Activated CD4-positive, alpha-beta T cell treated with anti-CD3 and anti-CD28 coated beads, Interleukin-2, amount 10 ng/mL, durations not matched to agents 24 days and 14 days (primary cell): ENCODE measurements at regions of chr1 and their contacts with region 1.

Region 1: DNA sequence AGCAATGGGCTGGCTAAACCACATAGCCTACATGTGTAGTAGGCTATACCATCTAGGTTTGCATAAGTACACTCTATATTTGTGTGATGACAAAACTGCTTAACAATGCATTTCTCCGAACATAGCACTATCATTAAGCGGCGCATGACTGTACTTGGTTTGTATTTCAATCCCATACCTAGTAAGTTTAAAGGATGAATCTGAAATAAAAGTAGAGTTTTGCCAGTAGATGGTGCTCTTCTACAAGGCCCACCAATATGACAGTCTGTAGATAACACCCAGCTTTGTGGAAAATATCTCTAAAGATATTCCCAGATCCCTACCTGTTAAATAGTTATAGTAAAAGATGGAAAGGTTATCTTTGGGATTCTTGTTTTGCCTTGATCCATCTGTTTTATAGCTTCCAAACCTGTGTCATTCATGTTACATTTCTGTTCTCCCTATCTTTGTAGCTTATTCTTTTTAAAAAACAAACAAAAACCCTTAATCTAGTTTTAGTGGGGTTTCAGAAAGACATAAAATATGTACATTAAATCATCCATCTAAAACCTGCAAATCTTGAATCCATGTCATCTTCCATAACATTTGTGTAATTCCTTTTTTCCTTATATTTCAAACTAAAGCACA is 33.9 kb upstream of the ASPM start:
- DNase-seq: no peak
- H3K4me3 Mint-ChIP-seq: no peak overlapping the region
- H3K27ac Mint-ChIP-seq: no peak overlapping the region
- H3K4me1 Mint-ChIP-seq: peaks cover 2% of the 10 kb centered on the region
- H3K27me3 Mint-ChIP-seq: no peaks in the 10 kb centered on the region

Region 2: DNA sequence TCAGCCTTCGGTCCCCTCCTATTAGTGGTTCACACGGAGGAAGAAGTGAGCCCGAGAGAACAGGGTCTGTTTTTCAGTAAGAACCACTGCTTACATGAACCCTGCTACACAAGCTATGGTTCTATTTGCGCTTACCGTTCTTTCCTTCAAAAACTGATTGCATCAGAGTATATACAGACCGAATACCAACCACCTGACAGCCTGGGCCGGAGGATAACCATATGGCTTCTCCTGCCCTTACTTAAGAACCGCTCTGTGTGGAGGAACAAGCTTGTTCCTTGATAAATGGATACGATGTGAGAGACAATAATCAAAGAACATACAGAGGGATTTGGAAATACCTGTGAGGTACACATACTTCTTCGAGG is 571.0 kb before region 1 on chr1:
- intact Hi-C with region 1: no loop called
- DNase-seq: no peak
- H3K4me3 Mint-ChIP-seq: no peak overlapping the region
- H3K27ac Mint-ChIP-seq: no peak overlapping the region
- H3K4me1 Mint-ChIP-seq: peaks cover 4% of the 10 kb centered on the region
- H3K27me3 Mint-ChIP-seq: peaks cover 38% of the 10 kb centered on the region

Region 3: DNA sequence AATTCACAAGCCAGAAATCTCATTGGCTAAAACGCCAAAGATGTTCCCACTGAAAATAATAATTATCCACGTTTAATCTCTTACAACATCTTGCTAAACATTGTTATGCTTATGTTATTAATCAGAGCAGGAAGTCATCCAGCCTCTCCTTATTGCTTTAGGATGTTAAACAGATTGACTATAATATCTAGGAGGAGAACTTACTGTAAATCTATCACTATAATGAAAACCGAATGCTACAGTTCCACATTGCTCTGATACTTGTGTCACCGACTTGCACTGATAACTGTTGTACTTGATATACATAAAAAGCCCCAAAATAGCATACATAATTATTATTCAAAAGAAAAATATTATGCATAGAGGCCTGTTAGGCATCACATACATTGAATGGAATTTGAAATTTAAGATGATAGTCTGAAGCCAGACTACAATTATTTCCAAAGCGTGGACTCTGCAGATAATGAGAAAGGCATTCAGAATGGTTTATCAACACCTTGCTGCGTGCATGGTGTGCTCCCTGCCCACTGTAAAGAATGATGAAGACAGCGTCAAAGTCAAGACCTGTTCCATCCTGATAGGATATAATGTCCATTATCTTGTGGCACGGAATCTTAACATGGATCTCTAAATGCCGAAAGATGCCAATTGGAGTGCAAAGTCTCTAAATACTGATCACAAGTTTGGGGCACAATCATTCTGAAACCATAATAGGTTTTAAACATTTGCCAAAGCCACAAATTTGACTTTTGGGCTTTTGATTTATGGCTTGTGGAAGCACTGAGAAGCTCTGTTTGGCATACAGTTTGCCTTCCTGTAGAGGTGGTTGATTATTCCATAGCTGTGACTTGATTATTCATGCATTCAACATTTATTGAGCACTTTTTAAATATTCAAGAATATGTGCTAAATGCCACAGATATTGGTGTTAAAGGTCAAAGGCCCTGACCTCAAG is 159.0 kb after region 1 on chr1:
- intact Hi-C with region 1: loop called (anchors 2 kb)
- DNase-seq: no peak
- H3K4me3 Mint-ChIP-seq: no peak overlapping the region
- H3K27ac Mint-ChIP-seq: no peak overlapping the region
- H3K4me1 Mint-ChIP-seq: peaks cover 7% of the 10 kb centered on the region
- H3K27me3 Mint-ChIP-seq: peaks cover 3% of the 10 kb centered on the region

Region 4: GRCh38 chr1:197356723-197357533 is 176.6 kb after region 1 on chr1:
- intact Hi-C with region 1: loop called (anchors 1 kb)
- DNase-seq: peak; percentile 74
- H3K4me3 Mint-ChIP-seq: no peak overlapping the region
- H3K27ac Mint-ChIP-seq: no peak overlapping the region
- H3K4me1 Mint-ChIP-seq: no peaks in the 10 kb centered on the region
- H3K27me3 Mint-ChIP-seq: no peaks in the 10 kb centered on the region